Activated T-helper 1 cell treated with anti-CD3 and anti-CD28 coated beads, Interleukin-12 subunit alpha, Interleukin-12 subunit beta, Interleukin-2, Interleukin-4 antibody, amounts not matched to agents 30 ng/mL and 10 ng/mL and 1 ng/mL, durations not matched to agents 14 hours and 24 hours and 36 hours (primary cell): ENCODE measurements at regions of chr13 and their contacts with region 1.

Region 1: GRCh38 chr13:94362411-94362909 is 117.0 kb downstream of the DCT start:
- DNase-seq: peak; percentile 60
- H3K4me3 Mint-ChIP-seq: no peak overlapping the region
- H3K27ac Mint-ChIP-seq: no peak overlapping the region
- H3K4me1 Mint-ChIP-seq: peaks cover 8% of the 10 kb centered on the region
- H3K27me3 Mint-ChIP-seq: peaks cover 14% of the 10 kb centered on the region

Region 2: DNA sequence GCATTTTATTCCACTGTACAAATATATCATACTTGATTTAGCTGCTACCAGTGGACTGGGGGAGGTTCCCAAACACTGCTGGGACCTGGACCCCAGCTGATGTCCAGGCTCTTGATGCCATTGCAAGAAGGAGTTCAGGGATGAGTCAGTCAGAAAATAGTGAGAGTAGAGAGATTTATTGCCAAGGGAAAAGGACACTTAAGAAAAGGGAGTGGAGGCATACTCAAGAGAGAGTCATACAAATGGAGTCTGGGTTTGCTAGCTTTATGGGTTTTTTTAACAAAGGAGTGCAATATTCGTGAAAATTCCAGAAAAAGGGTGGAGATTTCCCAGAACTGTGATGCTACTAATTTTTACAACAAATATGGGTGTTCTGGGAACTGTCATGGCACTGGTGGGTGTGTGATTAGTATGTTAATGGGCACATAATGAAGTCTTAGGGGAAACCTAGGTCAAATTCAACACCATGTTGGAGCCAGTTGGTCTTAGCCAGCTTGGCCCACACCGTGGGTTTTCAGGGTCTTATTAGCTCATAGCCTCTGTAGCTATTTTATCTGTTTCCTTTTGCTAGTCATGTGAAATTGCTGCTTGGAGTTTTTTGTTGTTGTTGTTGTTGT is 1099.6 kb before region 1 on chr13:
- intact Hi-C with region 1: loop called (anchors 10 kb)
- DNase-seq: no peak
- H3K4me3 Mint-ChIP-seq: no peak overlapping the region
- H3K27ac Mint-ChIP-seq: no peak overlapping the region
- H3K4me1 Mint-ChIP-seq: no peaks in the 10 kb centered on the region
- H3K27me3 Mint-ChIP-seq: no peaks in the 10 kb centered on the region

Region 3: DNA sequence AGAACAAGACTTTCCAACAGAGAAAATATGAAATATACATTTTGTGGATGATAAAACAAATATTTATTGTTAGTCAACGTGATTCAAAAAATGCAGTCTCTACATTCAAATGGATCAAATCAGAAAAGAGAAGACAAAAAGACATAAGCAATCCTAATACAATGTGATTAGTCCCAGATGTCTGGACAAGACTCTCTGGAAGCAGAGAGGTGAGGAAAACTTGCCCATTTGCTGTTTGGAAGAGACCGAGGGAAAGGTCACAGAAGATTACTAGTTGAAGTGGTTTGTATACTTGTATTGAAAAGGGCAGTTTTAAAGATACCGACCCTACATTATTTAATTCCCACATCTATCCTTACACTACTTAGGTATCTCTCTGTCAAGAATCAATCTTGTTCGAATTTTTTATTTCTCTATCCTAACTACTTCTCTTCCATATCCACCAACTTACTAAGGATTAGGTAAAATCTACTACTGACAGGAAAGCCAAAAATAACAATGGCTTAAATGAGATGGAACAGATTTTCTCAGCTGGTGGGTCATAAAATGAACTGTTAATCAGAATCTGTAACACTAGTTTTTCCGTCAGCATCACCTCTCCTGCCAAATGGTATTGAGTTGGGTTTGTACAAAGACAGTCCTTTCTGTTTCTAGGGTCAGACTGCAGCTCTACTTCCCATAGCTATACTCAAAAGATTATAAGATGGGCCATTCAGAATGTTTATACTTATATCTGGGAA is 380.1 kb before region 1 on chr13:
- intact Hi-C with region 1: no loop called
- DNase-seq: no peak
- H3K4me3 Mint-ChIP-seq: no peak overlapping the region
- H3K27ac Mint-ChIP-seq: no peak overlapping the region
- H3K4me1 Mint-ChIP-seq: no peaks in the 10 kb centered on the region
- H3K27me3 Mint-ChIP-seq: no peaks in the 10 kb centered on the region

Region 4: GRCh38 chr13:94033830-94034642 is 328.4 kb before region 1 on chr13:
- intact Hi-C with region 1: loop called (anchors 10 kb)
- DNase-seq: no peak
- H3K4me3 Mint-ChIP-seq: no peak overlapping the region
- H3K27ac Mint-ChIP-seq: no peak overlapping the region
- H3K4me1 Mint-ChIP-seq: no peaks in the 10 kb centered on the region
- H3K27me3 Mint-ChIP-seq: no peaks in the 10 kb centered on the region

Region 5: GRCh38 chr13:94128430-94128829 is 234.0 kb before region 1 on chr13:
- intact Hi-C with region 1: loop called (anchors 5 kb)
- DNase-seq: no peak
- H3K4me3 Mint-ChIP-seq: no peak overlapping the region
- H3K27ac Mint-ChIP-seq: no peak overlapping the region
- H3K4me1 Mint-ChIP-seq: no peaks in the 10 kb centered on the region
- H3K27me3 Mint-ChIP-seq: peaks cover 2% of the 10 kb centered on the region

Region 6: GRCh38 chr13:94345374-94346195 is 16.9 kb before region 1 on chr13:
- intact Hi-C with region 1: no loop called
- DNase-seq: no peak
- H3K4me3 Mint-ChIP-seq: no peak overlapping the region
- H3K27ac Mint-ChIP-seq: no peak overlapping the region
- H3K4me1 Mint-ChIP-seq: peaks cover 28% of the 10 kb centered on the region
- H3K27me3 Mint-ChIP-seq: peaks cover 6% of the 10 kb centered on the region

Region 7: GRCh38 chr13:94601446-94602431 is 239.3 kb after region 1 on chr13 and contains the start of gene GPR180:
- intact Hi-C with region 1: no loop called
- DNase-seq: peak; percentile 89
- H3K4me3 Mint-ChIP-seq: peak within 1 kb of the TSS; percentile 88
- H3K27ac Mint-ChIP-seq: peak within 1 kb of the TSS; percentile 75
- H3K4me1 Mint-ChIP-seq: peaks cover 31% of the 10 kb centered on the region
- H3K27me3 Mint-ChIP-seq: no peaks in the 10 kb centered on the region
- total RNA-seq, gene GPR180: 9.6 and 11.1 TPM in 2 replicates

Region 8: DNA sequence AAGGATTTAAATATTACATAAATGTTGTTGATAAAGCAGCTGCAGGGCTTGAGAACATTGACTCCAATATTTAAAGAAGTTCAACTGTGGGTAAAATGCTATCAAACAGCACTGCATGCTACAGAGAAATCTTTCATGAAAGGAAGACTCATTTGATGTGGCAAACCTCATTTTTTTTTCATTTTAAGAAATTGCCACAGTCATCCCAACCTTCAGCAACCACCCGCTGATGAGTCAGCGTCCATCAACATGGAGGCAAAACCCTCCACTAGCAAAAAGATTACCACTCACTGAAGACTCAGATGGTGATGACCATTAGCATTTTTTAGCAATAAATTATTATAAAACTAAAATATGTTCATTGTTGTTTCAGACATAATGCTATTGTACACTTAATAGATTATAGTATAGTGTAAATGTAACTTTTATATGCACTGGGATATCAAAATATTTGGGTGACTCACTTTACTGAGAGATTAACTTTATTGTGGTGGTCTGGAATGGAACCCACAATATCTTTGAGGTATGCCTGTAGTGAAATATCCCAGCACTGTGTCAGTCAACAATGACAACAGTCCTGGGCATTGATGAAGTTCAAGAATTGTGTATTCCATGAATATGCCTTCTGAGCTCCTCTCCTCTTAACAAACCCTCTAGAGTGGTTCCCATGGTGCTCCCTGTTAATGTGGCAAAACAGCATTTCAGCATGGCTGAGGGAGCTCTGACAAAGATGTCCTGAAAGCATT is 402.3 kb after region 1 on chr13:
- intact Hi-C with region 1: no loop called
- DNase-seq: no peak
- H3K4me3 Mint-ChIP-seq: no peak overlapping the region
- H3K27ac Mint-ChIP-seq: no peak overlapping the region
- H3K4me1 Mint-ChIP-seq: no peaks in the 10 kb centered on the region
- H3K27me3 Mint-ChIP-seq: peaks cover 13% of the 10 kb centered on the region